Natural killer cell (primary cell): ENCODE measurements at regions of chr2 and their contacts with region 1.

Region 1: GRCh38 chr2:216139884-216140283 is 30.7 kb downstream of the XRCC5 start:
- DNase-seq: peak in 1 of 2 donors; percentile 69
- ATAC-seq: peak in 2 of 3 donors; percentile 60 to 68
- H3K4me3 ChIP-seq: no peak overlapping the region
- H3K4me3 Mint-ChIP-seq: no peak overlapping the region
- H3K27ac ChIP-seq: no peak overlapping the region
- H3K27ac Mint-ChIP-seq: no peak overlapping the region
- H3K4me1 ChIP-seq: no peaks in the 10 kb centered on the region
- H3K4me1 Mint-ChIP-seq: peaks cover 5 to 8% of the 10 kb centered on the region in 2 donors
- H3K27me3 ChIP-seq: no peaks in the 10 kb centered on the region
- H3K27me3 Mint-ChIP-seq: no peaks in the 10 kb centered on the region
- CTCF ChIP-seq: no peak

Region 2: GRCh38 chr2:215967590-215968378 is 172.1 kb before region 1 on chr2:
- intact Hi-C with region 1: no loop called
- DNase-seq: no peak
- ATAC-seq: no peak
- H3K4me3 ChIP-seq: no peak overlapping the region
- H3K4me3 Mint-ChIP-seq: no peak overlapping the region
- H3K27ac ChIP-seq: no peak overlapping the region
- H3K27ac Mint-ChIP-seq: peak overlapping the region in 1 of 2 donors; percentile 9
- H3K4me1 ChIP-seq: no peaks in the 10 kb centered on the region
- H3K4me1 Mint-ChIP-seq: peaks cover 16 to 34% of the 10 kb centered on the region in 2 donors
- H3K27me3 ChIP-seq: no peaks in the 10 kb centered on the region
- H3K27me3 Mint-ChIP-seq: no peaks in the 10 kb centered on the region
- CTCF ChIP-seq: no peak

Region 3: GRCh38 chr2:216034065-216034464 is 105.8 kb before region 1 on chr2:
- intact Hi-C with region 1: loop called (anchors 1 kb)
- DNase-seq: peak; percentile 68 to 86
- ATAC-seq: peak; percentile 86 to 92 (median 91)
- H3K4me3 ChIP-seq: no peak overlapping the region
- H3K4me3 Mint-ChIP-seq: no peak overlapping the region
- H3K27ac ChIP-seq: no peak overlapping the region
- H3K27ac Mint-ChIP-seq: no peak overlapping the region
- H3K4me1 ChIP-seq: no peaks in the 10 kb centered on the region
- H3K4me1 Mint-ChIP-seq: peaks cover 0 to 8% of the 10 kb centered on the region in 2 donors
- H3K27me3 ChIP-seq: no peaks in the 10 kb centered on the region
- H3K27me3 Mint-ChIP-seq: no peaks in the 10 kb centered on the region
- CTCF ChIP-seq: peak; percentile 88